AG04450 (cell line): ENCODE measurements at regions of chr12 and their contacts with region 1.

Region 1: DNA sequence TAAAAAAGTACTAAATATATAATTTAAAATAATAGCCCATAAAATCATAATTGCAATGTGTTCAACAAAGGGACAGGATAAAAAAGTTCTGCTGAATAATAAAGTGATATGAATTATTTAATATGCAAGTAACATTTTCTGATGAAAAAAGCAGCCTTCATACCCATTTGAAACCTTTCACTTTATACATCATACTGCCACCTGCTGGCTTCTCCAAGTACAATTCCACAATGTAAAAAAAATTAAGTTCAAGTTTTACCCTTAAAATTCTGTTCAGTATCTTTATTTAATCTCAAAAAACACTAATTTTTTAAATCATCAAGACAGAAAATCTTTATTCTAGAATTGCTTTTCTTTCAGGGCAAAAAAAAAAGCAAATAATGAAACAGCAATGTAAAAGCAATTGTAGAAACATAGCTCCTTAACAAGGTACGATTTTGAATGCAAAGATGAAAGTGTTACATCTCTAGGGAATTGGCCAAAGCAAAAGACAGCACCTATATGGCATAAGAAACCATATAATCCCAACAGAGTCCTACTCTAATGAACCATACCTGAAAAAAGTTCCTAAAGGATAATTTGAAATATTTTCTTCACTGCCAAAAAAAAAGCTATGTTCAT is 15.0 kb downstream of the MDM1 start:
- DNase-seq: peak; percentile 15
- H3K4me3 ChIP-seq: no peak overlapping the region
- H3K27ac ChIP-seq: no peak overlapping the region
- H3K27me3 ChIP-seq: no peaks in the 10 kb centered on the region
- CTCF ChIP-seq: peak; percentile 61

Region 2: DNA sequence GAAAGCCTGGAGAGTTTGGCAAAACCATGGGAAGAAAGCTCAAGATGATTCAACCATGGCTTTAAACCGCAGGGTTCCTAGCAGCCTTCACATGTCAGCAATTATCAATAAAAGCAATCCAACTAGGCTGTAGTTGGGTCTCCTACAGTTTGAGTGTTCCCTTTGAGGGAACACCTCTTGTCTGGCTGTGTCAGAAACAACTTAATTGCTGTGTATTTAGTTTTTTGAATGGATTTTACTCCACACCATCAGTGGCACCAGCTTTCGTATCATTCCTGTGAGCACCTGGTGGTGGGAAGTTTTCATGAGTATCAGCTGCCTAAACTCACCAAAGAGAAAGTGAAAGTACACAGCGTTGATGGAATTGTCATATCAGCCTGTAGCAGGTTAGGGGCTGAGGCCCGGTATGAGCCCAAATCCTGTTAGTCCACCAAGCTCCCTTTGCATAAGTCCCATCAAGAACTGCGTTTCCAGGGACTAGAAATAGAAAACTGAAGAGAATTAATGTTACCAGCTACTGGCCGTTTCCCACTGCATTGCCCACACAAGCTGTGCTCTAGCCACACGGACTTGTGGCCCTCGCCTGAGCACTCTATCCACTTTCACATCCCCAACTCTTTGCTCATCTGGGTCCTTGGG is 80.6 kb before region 1 on chr12:
- CTCF ChIA-PET with region 1: interaction called, 10 read pairs
- POLR2A ChIA-PET with region 1: no interaction called
- DNase-seq: no peak
- H3K4me3 ChIP-seq: no peak overlapping the region
- H3K27ac ChIP-seq: no peak overlapping the region
- H3K27me3 ChIP-seq: peaks cover 4% of the 10 kb centered on the region
- CTCF ChIP-seq: no peak

Region 3: GRCh38 chr12:68331869-68332727 is 14.9 kb after region 1 on chr12 and contains the start of gene MDM1:
- CTCF ChIA-PET with region 1: interaction called, 11 read pairs
- POLR2A ChIA-PET with region 1: interaction called, 5 read pairs
- DNase-seq: peak; percentile 95
- H3K4me3 ChIP-seq: peak within 1 kb of the TSS; percentile 83
- H3K27ac ChIP-seq: no peak within 1 kb of the TSS
- H3K27me3 ChIP-seq: no peaks in the 10 kb centered on the region
- CTCF ChIP-seq: no peak
- polyA plus RNA-seq, gene MDM1: 8.1 and 13.5 TPM in 2 replicates